Pancreas (tissue), 10 donors: ENCODE measurements at regions of chr1 and their contacts with region 1.

Region 1: DNA sequence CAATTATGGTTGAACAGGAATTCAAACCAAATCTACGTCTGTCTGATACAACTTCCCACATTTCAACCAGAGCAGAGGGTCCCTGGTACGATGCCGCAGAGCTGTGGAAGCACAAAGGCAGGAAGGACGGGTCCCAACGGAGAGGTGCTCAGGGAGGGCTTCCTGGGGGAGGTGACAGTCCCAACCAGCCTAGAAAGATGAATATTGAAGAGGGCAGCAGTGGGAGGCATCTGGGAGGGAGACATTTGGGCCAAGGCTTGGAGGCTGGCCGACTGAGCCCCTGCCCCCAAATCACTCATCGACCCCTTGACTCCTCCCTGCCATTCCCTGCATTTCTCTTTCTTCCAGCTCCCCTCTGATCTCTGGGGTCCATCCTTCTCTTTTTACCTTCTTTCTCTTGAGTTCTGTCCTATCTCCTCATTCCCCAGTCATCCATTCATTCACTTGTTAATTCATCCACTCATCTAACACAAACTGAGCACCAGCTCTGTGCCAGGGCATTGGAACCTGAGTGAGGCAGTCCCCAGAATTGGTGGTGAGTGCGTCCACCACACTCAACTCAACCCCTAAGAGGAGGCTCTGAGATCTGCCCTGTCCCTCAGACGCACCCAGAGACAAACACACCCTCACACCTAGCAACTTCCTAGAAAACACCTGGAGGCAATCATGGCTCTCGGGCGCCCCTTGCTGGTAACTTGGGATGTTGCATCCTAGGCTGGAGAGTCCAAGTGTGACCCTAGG is 13.2 kb upstream of the CELA3B start:
- DNase-seq: peak; percentile 64 to 94 (median 86)
- ATAC-seq: peak; percentile 83 to 99 (median 92)
- H3K4me3 ChIP-seq: no peak overlapping the region
- H3K27ac ChIP-seq: no peak overlapping the region
- H3K4me1 ChIP-seq: no peaks in the 10 kb centered on the region
- H3K27me3 ChIP-seq: no peaks in the 10 kb centered on the region
- CTCF ChIP-seq: peak; percentile 82 to 93 (median 86)

Region 2: DNA sequence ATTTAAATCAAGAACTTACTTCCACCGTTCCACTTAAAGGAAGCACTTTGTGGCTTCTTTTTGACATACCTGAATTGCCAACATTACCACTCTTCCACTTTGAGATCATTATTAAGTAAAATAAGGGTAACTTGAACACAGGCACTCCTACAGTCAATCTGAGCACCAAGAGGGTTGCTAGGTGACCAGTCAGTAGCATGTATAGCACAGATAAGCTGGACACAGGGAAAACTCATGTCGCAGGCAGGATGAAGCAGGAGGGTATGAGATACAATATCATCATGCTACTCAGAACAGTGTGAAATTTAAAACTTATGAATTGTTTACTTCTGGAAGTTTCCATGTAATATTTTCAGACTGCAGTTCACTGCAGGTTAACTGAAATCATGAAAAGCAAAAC is 247.5 kb before region 1 on chr1:
- intact Hi-C with region 1: no loop called
- DNase-seq: no peak
- ATAC-seq: no peak
- H3K4me3 ChIP-seq: no peak overlapping the region
- H3K27ac ChIP-seq: no peak overlapping the region
- H3K4me1 ChIP-seq: no peaks in the 10 kb centered on the region
- H3K27me3 ChIP-seq: no peaks in the 10 kb centered on the region
- CTCF ChIP-seq: no peak

Region 3: DNA sequence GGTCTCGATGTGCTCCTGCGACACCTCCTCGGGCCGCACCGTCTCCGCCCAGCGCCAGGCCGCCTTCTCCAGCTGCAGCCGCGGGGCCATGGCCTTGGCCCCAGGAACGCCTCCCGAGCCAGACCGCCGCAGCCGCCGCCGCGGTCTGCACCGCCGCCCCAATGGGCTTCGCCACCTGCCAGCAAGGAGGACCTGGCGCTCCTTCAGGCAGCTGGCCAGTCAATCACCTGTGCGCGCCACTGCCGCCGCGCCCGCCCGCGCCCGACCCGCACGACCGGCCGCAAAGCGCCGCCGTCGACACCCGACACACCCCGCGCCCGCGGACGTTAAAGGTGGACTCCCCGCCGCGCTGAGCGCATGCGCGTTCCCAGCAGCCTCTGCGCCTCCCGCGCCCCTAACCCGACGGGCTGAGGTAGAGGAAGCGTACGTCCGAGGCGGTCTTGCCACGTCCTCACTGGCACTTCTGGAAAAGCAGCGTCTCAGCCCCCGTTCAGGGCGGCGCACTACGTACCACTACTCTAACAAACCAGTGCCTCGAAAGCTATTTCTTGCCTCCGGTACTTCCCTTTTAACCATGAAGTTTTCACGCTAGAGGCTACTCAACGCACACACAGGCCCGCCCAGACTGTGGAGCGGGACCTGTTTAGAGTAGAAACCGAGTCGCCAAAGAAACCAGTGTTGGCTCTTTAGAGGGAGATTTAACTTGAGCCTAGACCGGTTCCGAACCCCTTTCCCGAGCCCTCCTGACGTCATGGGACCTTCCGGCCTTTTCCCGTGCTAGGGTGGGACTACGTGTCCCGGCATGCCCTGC is 180.6 kb before region 1 on chr1 and contains the start of gene USP48:
- intact Hi-C with region 1: loop called in 1 of 3 experiments (anchors 10 kb)
- DNase-seq: peak; percentile 98 to 100 (median 98)
- ATAC-seq: peak; percentile 83 to 95 (median 88)
- H3K4me3 ChIP-seq: peak within 1 kb of the TSS; percentile 73 to 92 (median 83)
- H3K27ac ChIP-seq: peak within 1 kb of the TSS; percentile 99 to 100 (median 100)
- H3K4me1 ChIP-seq: peaks cover 0 to 8% (median 5%) of the 10 kb centered on the region in 3 donors
- H3K27me3 ChIP-seq: no peaks in the 10 kb centered on the region
- CTCF ChIP-seq: no peak
- total RNA-seq, gene USP48: 24.3 to 30.6 (median 26.0) TPM

Region 4: DNA sequence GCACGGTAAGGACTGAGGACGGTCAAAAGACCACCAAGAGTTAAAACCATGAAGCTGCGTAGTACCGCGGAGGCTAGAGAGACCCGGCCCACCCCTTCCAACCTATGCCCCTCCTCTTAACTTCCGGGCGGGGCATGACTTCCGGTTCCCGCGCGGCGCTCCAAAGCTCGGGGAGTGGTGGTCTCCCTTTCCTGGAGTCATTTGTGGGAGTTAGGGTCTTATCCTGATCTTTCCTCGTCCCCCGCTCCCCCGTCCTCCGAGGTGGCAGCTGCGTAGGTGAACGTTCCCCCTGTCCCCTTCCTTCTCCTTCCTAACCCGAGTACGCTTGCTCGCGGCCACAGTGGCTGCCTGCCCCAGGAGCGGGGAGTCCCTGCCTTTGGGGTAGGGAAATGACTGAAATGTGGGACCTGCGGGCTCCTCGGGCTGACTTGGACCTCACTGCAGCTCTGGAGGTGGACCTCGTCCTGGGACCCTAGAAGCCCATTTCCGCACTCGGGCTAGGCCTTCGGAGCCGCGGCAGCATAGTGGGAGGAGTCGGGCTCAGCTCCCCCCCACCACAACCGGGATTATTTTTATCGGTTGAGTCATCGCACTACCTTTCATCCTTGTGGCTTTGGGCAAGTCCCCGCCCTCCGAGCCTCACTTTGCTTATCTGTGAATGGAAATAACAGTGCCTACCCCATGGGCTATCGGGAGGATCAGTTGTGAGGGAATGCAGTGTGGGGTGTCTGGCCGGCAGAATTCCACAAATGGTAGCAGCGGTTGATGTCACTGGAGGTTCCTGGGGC is 61.9 kb after region 1 on chr1:
- intact Hi-C with region 1: no loop called
- DNase-seq: peak; percentile 54 to 81 (median 68)
- ATAC-seq: peak; percentile 73 to 95 (median 80)
- H3K4me3 ChIP-seq: peak overlapping the region; percentile 34 to 61 (median 36)
- H3K27ac ChIP-seq: peak overlapping the region; percentile 81 to 97 (median 90)
- H3K4me1 ChIP-seq: no peaks in the 10 kb centered on the region
- H3K27me3 ChIP-seq: no peaks in the 10 kb centered on the region
- CTCF ChIP-seq: no peak

Region 5: DNA sequence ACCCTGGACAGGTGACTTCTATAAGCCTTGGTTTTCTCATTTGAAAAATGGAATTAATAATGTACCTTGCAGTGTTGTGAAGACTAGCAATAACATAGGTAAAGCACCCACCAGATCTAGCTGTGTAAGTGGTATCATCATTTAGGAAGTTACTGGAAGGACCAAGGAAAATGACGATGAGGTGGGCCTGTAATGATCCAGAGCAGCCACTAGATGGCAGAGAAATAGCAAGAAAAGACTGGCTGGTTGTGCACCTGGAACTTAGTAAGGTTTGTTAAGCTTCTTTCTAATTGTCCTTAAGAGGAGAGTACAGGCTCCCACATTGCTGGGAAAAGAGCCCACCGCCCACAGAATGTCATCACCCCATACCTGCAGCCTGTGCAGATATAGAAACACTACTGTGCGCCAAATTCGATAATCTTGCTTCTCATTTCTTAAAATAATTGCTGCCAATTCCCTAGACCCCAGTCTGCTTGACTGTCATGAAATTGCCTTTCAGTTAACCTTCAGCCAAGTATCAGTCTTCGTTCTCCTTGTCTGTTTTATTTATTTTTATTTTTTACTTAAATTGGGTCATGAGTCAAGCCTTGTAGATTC is 142.1 kb after region 1 on chr1:
- intact Hi-C with region 1: no loop called
- DNase-seq: peak in 1 of 6 donors; percentile 52
- ATAC-seq: peak; percentile 51 to 89 (median 82)
- H3K4me3 ChIP-seq: no peak overlapping the region
- H3K27ac ChIP-seq: no peak overlapping the region
- H3K4me1 ChIP-seq: no peaks in the 10 kb centered on the region
- H3K27me3 ChIP-seq: no peaks in the 10 kb centered on the region
- CTCF ChIP-seq: peak; percentile 59 to 72 (median 67)

Region 6: DNA sequence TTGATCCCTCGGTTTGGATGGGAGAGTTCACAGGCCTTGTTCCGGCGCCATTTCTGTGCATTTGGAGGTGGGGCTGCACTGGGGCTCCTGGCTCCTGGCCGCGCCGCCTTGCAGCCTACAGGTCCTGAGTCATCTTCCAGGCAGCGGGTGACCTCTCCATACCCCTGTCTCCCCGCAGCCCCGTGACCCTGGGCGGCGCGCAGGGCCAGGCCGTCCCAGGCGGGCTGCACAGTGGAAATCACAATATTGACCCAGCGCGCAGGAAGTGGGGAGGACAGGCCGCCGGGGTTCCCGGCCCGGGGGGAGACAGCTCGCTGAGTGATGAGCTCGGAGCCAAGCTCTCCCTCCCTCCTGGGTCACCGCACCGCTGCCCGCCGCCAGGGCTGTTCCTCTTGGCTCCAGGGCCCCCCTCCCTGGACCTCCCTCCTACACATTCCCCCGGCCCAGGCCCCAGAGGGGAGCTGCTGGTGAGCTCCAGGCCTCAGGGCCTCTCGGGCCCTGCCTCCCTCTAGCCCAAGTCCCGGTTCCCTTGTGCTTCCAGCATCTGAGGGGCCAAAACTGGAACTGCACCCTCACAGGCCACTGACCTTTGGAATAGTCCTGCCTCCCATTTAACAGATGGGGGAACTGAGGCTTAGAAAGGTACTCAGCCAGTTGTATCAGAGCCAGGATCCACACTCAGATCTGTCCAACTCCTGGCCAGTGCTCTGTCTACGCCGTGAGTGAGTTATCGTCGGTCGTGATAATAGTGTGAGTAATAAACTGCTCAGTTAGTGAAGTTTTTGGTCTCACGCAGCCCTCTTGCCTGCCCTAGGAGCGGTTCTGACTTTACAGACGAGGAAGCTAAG is 322.1 kb after region 1 on chr1:
- intact Hi-C with region 1: no loop called
- DNase-seq: no peak
- ATAC-seq: peak in 1 of 4 donors; percentile 44
- H3K4me3 ChIP-seq: no peak overlapping the region
- H3K27ac ChIP-seq: no peak overlapping the region
- H3K4me1 ChIP-seq: no peaks in the 10 kb centered on the region
- H3K27me3 ChIP-seq: no peaks in the 10 kb centered on the region
- CTCF ChIP-seq: no peak